Panc1 (cell line): ENCODE measurements at regions of chr1 and their contacts with region 1.

Region 1: GRCh38 chr1:19074902-19075721 is 118.6 kb upstream of the IFFO2 start:
- DNase-seq: no peak
- ATAC-seq: no peak
- H3K4me3 ChIP-seq: no peak overlapping the region
- H3K27ac ChIP-seq: no peak overlapping the region; the same call in 1 of the 2 replicates
- H3K4me1 ChIP-seq: peaks cover 20% of the 10 kb centered on the region
- H3K27me3 ChIP-seq: no peaks in the 10 kb centered on the region
- CTCF ChIP-seq: no peak

Region 2: GRCh38 chr1:18956369-18957135 is 118.6 kb before region 1 on chr1 and contains the start of gene IFFO2:
- CTCF ChIA-PET with region 1: interaction called, 3 read pairs
- POLR2A ChIA-PET with region 1: no interaction called
- in situ Hi-C with region 1: no loop called
- intact Hi-C with region 1: loop called (anchors 10 kb)
- DNase-seq: peak; percentile 67
- ATAC-seq: peak; percentile 86
- H3K4me3 ChIP-seq: peak within 1 kb of the TSS; percentile 71 to 85
- H3K27ac ChIP-seq: peak within 1 kb of the TSS; percentile 89
- H3K4me1 ChIP-seq: peaks cover 31% of the 10 kb centered on the region
- H3K27me3 ChIP-seq: no peaks in the 10 kb centered on the region
- CTCF ChIP-seq: no peak
- total RNA-seq, gene IFFO2: 59.4 TPM